ENCODE measurements at regions of chr11 and their contacts with region 1.

Region 1: GRCh38 chr11:10405855-10406592 is 49.0 kb upstream of the AMPD3 start:
- DNase-seq: peak in 1 of 2 donors; percentile 76
- ATAC-seq: peak; percentile 63 to 90 (median 89)
- H3K4me3 ChIP-seq: no peak overlapping the region
- H3K4me3 Mint-ChIP-seq: no peak overlapping the region
- H3K27ac ChIP-seq: no peak overlapping the region
- H3K27ac Mint-ChIP-seq: no peak overlapping the region
- H3K4me1 ChIP-seq: peaks cover 26% of the 10 kb centered on the region
- H3K4me1 Mint-ChIP-seq: peaks cover 41 to 44% of the 10 kb centered on the region in 2 donors
- H3K27me3 ChIP-seq: no peaks in the 10 kb centered on the region
- H3K27me3 Mint-ChIP-seq: no peaks in the 10 kb centered on the region
- CTCF ChIP-seq: peak; percentile 71

Region 2: GRCh38 chr11:10375280-10375971 is 30.6 kb before region 1 on chr11:
- intact Hi-C with region 1: no loop called
- DNase-seq: no peak
- ATAC-seq: no peak
- H3K4me3 ChIP-seq: no peak overlapping the region
- H3K4me3 Mint-ChIP-seq: no peak overlapping the region
- H3K27ac ChIP-seq: no peak overlapping the region
- H3K27ac Mint-ChIP-seq: no peak overlapping the region
- H3K4me1 ChIP-seq: no peaks in the 10 kb centered on the region
- H3K4me1 Mint-ChIP-seq: no peaks in the 10 kb centered on the region
- H3K27me3 ChIP-seq: no peaks in the 10 kb centered on the region
- H3K27me3 Mint-ChIP-seq: peaks cover 7 to 29% of the 10 kb centered on the region in 2 donors
- CTCF ChIP-seq: no peak

Region 3: DNA sequence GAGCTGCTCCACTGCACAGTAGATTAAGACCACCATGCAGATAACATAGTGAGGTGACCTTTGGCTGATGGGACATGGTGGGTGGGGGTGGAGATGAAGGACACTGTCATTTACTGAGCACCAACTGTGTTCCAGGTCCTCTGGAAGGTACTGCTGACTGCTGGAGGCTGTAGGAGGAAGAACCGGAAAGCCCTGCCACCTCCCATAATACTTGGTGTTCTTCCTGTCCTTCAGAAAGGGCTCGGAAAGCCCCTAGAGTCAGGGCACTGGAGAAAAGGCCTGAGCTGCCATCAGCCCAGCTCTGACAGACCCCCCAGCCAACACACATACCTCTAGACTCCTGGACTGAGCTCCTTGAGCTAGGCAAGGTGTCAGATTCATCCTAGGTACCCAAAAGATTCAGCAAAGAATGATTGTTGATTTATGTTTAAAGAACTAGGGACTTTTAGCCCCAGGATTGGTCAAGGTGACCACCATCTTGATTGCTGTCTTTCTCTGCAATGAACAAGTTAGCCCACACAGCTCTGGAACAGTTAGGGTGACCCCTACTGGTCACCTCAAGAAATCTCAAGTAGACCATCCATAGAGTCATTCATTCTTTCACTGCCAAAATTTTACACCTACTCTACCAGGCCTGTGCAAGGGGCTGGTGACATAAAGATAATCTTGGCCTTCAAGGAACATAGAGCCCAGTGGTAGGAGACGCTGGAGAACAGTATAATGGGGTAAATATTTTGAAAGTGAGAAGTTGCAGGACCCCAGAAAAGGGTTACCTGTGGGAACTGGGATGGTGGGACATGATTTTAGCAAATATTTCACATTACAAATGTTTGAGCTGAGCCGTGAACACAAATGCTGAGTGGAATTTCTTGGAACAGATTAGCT is 248.1 kb after region 1 on chr11:
- intact Hi-C with region 1: loop called (anchors 1 kb)
- DNase-seq: peak in 1 of 2 donors; percentile 80
- ATAC-seq: peak; percentile 82 to 93 (median 83)
- H3K4me3 ChIP-seq: no peak overlapping the region
- H3K4me3 Mint-ChIP-seq: no peak overlapping the region
- H3K27ac ChIP-seq: no peak overlapping the region
- H3K27ac Mint-ChIP-seq: no peak overlapping the region
- H3K4me1 ChIP-seq: peaks cover 14% of the 10 kb centered on the region
- H3K4me1 Mint-ChIP-seq: peaks cover 0 to 3% of the 10 kb centered on the region in 2 donors
- H3K27me3 ChIP-seq: no peaks in the 10 kb centered on the region
- H3K27me3 Mint-ChIP-seq: no peaks in the 10 kb centered on the region
- CTCF ChIP-seq: peak; percentile 86

Measured in natural killer cell (primary cell).